Activated naive CD4-positive, alpha-beta T cell treated with anti-CD3 and anti-CD28 coated beads, Interleukin-2, amount 10 ng/mL, durations not matched to agents 7 days and 5 days (primary cell): ENCODE measurements at regions of chr1 and their contacts with region 1.

Region 1: DNA sequence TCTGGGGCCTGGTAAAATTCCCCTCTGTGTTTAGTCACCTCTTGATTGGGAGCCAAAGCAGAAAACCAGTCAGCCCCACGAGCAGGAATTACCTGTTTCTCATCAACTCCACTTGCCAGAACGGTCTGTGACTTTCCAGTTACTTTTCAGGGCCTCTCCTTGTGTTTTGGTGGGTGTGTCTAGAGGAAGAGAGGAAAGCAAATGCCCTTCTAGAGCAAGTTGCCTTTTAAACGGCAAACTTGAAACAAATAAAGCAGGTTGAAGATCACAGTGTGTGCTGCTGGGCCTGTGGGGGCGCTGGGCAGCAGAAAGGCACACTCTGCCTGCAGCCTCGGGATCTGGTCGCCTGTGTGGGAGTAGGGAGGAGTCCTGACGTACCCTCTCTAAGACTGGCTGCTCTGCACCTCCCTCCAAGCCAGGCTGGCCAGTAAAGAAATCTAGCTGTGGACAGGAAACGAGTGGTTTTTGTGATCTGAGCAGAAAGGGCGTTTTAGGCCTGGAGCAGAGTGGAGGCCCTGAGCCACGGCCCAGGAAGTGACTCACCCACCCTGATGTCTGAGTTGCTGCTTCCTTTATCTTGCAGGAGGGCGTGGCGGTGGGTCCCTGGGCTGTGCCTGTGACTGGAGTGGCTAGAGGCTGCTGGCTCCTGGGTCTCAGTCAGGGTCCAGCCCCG is 11.1 kb upstream of the S100A11 start:
- DNase-seq: peak; percentile 92
- H3K4me3 Mint-ChIP-seq: peak overlapping the region; percentile 70
- H3K27ac Mint-ChIP-seq: peak overlapping the region; percentile 98
- H3K4me1 Mint-ChIP-seq: peaks cover 54% of the 10 kb centered on the region
- H3K27me3 Mint-ChIP-seq: peaks cover 13% of the 10 kb centered on the region

Region 2: GRCh38 chr1:151839457-151840405 is 208.1 kb before region 1 on chr1 and contains the start of gene C2CD4D:
- CTCF ChIA-PET with region 1: no interaction called
- DNase-seq: peak; percentile 78
- H3K4me3 Mint-ChIP-seq: peak within 1 kb of the TSS; percentile 74
- H3K27ac Mint-ChIP-seq: peak within 1 kb of the TSS; percentile 73
- H3K4me1 Mint-ChIP-seq: peaks cover 51% of the 10 kb centered on the region
- H3K27me3 Mint-ChIP-seq: peaks cover 44% of the 10 kb centered on the region

Region 3: DNA sequence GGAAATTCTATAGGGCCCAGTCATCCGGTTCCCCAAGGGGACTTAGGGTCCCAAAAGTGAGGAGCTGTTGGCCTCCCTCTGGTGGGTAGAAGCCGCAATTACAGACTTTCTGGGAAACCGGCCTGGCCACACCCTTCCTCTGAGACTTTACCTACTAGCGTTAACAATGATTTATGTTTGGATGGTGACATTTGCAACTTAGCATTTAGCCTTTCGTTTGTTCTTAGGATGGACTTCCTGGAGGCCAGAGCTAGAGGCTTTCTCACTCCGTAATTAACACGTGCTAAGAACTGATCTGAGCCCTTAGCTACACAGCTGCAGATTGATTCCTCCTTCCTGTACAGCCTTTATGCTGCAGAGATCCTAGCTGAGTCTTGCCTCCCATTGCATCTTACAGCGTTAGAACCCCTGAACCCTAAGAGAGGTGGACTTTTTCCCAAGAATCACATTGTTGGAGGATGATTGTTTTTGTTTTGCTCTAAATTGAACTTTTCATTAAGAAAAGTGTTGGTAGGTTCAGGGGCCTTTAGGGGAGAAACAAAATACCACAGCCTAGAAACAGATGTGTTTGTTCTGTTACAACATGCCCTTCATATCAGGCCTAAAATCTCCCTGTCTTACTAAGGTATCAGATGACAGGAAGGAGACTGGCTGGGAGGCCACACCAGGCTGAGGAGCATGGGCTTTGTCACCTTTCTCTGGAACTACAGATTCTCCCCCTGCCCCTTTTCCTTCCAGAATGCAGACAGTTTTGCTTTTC is 13.0 kb before region 1 on chr1:
- CTCF ChIA-PET with region 1: interaction called, 49 read pairs
- DNase-seq: peak; percentile 80
- H3K4me3 Mint-ChIP-seq: peak overlapping the region; percentile 99
- H3K27ac Mint-ChIP-seq: peak overlapping the region; percentile 98
- H3K4me1 Mint-ChIP-seq: peaks cover 49% of the 10 kb centered on the region
- H3K27me3 Mint-ChIP-seq: no peaks in the 10 kb centered on the region